Activated naive CD4-positive, alpha-beta T cell treated with anti-CD3 and anti-CD28 coated beads for 36 hours (primary cell): ENCODE measurements at regions of chr6 and their contacts with region 1.

Region 1: GRCh38 chr6:7910654-7911344 is at the start of gene TXNDC5:
- DNase-seq: peak; percentile 71
- H3K4me3 Mint-ChIP-seq: peak within 1 kb of the TSS; percentile 81
- H3K27ac Mint-ChIP-seq: peak within 1 kb of the TSS; percentile 38
- H3K4me1 Mint-ChIP-seq: peaks cover 14% of the 10 kb centered on the region
- H3K27me3 Mint-ChIP-seq: no peaks in the 10 kb centered on the region
- total RNA-seq, gene TXNDC5: 60.7 to 62.2 TPM

Region 2: DNA sequence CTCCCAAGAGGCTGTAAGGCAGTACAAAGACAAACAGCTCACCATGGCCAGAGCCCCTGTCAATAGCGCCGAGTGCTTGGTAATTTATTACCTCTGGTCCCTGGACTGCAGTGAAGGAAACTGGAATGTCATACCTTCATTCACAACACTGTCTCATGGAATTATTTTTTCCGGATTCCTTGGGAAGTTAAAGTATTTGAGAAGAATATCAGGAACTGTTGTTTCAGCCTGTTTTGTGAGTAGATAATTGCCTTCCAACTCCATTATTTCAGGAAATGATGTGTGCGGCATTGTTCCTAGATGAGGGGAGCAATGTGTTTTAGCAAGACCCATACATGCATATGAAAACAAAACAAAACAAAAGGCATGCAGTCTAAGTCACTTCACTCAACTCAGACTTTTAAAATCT is 89.4 kb after region 1 on chr6:
- CTCF ChIA-PET with region 1: no interaction called
- intact Hi-C with region 1: loop called (anchors 5 kb)
- DNase-seq: no peak
- H3K4me3 Mint-ChIP-seq: no peak overlapping the region
- H3K27ac Mint-ChIP-seq: no peak overlapping the region
- H3K4me1 Mint-ChIP-seq: peaks cover 3% of the 10 kb centered on the region
- H3K27me3 Mint-ChIP-seq: no peaks in the 10 kb centered on the region

Region 3: GRCh38 chr6:8229915-8230756 is 319.3 kb after region 1 on chr6:
- CTCF ChIA-PET with region 1: no interaction called
- intact Hi-C with region 1: loop called (anchors 10 kb)
- DNase-seq: no peak
- H3K4me3 Mint-ChIP-seq: no peak overlapping the region
- H3K27ac Mint-ChIP-seq: no peak overlapping the region
- H3K4me1 Mint-ChIP-seq: no peaks in the 10 kb centered on the region
- H3K27me3 Mint-ChIP-seq: peaks cover 1% of the 10 kb centered on the region

Region 4: DNA sequence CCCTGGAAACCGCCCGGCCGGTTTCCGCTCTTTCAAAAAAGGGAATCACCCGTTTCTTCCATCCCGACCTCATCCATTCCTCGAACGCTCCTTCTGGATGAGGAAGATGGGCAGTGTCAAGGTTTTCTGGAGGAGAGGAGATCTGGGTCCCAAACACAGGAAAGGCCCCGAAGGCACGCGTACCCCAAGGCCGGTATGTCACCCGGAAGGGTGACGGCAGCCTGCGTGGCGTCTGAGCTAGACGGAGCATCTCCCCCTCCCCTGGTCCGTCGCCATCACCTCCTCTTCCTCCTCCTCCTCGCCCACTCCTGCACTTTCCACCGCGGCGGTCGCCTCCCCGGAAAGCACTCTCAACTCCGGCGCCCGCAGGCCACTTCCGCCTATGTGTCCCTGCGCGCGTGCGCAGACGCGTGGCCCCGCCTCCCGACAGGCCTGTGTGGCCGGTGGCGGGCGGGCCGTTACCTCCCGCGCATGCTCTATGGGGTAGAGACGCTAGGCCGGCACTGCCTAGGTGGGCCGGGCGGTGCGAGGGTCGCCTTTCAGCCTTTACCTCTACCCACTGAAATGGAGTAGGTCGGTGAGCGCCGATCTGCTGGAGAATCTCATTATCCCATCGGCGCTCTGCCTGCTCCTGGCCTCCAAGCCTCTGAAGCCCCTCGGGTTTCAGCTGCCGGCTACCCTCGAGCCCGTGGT is 524.5 kb after region 1 on chr6 and contains the start of gene SLC35B3:
- CTCF ChIA-PET with region 1: no interaction called
- intact Hi-C with region 1: loop called (anchors 5 kb)
- DNase-seq: peak; percentile 97
- H3K4me3 Mint-ChIP-seq: peak within 1 kb of the TSS; percentile 89
- H3K27ac Mint-ChIP-seq: peak within 1 kb of the TSS; percentile 94
- H3K4me1 Mint-ChIP-seq: peaks cover 32% of the 10 kb centered on the region
- H3K27me3 Mint-ChIP-seq: no peaks in the 10 kb centered on the region
- total RNA-seq, gene SLC35B3: 7.7 to 8.0 TPM